Activated T-helper 2 cell treated with anti-CD3 and anti-CD28 coated beads, Interferon-gamma antibody, Interleukin-2, Interleukin-4, amounts not matched to agents 10 μg/mL and 5 μg/mL and 100 μg/mL, durations not matched to agents 14 hours and 24 hours and 36 hours (primary cell): ENCODE measurements at regions of chr10 and their contacts with region 1.

Region 1: DNA sequence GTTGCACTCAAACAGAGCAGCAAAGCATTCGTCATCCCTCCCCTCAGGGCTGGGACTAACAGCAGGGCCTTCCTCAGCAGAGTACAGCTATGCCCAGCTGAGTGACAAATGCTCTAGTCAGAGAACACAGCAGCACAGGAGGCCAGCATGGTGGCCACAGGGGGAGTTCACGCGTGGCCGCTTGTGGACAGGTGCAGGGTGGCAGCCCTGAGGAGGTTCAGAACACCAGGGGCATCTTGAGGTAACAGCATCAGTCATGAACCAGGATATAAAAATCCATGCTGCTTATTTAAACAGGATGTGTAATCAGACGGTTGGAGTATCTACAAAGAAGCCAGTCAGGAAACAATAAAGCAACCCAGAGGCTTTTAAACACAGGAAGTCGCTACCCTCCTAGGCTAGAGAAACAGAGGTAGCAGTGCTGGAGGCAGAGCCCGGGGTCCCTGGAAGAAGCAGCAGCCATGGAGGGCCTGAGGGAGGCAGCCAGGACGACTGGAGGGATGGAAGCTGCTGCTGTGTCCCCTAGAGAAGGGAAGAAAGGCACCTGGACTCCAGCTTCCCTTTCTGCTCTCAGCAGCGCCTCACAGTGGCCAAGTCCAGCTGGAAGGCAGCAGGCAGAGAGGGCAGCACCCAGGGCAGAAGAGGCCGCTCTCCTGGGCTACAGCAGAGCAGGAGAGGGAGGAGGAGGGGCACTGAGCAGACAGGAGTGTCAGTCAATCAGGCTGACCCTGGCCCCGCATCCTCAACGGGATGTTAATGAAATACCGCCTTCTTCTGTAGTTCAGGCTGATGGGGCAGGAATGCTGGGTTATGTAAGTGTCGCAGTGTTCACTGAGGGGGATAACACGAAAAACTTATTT is 70.8 kb upstream of the UCN3 start:
- DNase-seq: peak; percentile 66
- H3K4me3 Mint-ChIP-seq: peak overlapping the region; percentile 89
- H3K27ac Mint-ChIP-seq: peak overlapping the region; percentile 92
- H3K4me1 Mint-ChIP-seq: peaks cover 69% of the 10 kb centered on the region
- H3K27me3 Mint-ChIP-seq: no peaks in the 10 kb centered on the region

Region 2: GRCh38 chr10:5168897-5169296 is 125.0 kb before region 1 on chr10:
- intact Hi-C with region 1: loop called (anchors 2 kb)
- DNase-seq: no peak
- H3K4me3 Mint-ChIP-seq: no peak overlapping the region
- H3K27ac Mint-ChIP-seq: peak overlapping the region; percentile 63
- H3K4me1 Mint-ChIP-seq: peaks cover 7% of the 10 kb centered on the region
- H3K27me3 Mint-ChIP-seq: no peaks in the 10 kb centered on the region

Region 3: DNA sequence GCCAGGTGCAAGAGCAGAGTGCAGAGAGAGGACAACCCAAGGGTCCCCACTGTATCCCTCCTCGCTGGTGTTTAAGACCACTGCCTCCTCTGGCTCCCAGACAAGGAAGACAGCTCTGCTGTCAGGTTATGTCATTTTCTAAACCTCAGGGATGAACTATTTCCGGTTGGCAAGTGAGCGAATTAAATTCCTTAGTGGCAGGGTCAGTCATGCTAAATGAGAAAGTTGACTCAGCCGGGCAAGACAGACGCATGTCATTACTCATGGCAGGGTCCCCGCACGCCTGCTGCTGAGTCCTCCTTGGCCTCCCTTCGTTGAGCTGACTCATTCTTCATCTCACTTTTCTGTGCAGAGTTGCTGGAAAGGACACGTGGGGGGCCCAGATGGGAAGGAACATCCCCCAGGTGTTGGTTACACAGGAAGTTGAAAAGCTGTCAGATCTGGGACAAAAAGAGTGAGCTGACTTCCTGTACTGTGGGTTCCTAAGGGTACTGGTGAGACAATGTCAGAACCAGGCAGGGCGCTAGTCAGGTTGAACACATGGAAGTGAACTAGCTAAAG is 23.7 kb after region 1 on chr10:
- intact Hi-C with region 1: loop called (anchors 1 kb)
- DNase-seq: peak; percentile 30
- H3K4me3 Mint-ChIP-seq: peak overlapping the region; percentile 19
- H3K27ac Mint-ChIP-seq: peak overlapping the region; percentile 18
- H3K4me1 Mint-ChIP-seq: peaks cover 34% of the 10 kb centered on the region
- H3K27me3 Mint-ChIP-seq: no peaks in the 10 kb centered on the region

Region 4: GRCh38 chr10:5396556-5397300 is 102.8 kb after region 1 on chr10:
- intact Hi-C with region 1: no loop called
- DNase-seq: no peak
- H3K4me3 Mint-ChIP-seq: no peak overlapping the region
- H3K27ac Mint-ChIP-seq: no peak overlapping the region
- H3K4me1 Mint-ChIP-seq: no peaks in the 10 kb centered on the region
- H3K27me3 Mint-ChIP-seq: peaks cover 22% of the 10 kb centered on the region

Region 5: DNA sequence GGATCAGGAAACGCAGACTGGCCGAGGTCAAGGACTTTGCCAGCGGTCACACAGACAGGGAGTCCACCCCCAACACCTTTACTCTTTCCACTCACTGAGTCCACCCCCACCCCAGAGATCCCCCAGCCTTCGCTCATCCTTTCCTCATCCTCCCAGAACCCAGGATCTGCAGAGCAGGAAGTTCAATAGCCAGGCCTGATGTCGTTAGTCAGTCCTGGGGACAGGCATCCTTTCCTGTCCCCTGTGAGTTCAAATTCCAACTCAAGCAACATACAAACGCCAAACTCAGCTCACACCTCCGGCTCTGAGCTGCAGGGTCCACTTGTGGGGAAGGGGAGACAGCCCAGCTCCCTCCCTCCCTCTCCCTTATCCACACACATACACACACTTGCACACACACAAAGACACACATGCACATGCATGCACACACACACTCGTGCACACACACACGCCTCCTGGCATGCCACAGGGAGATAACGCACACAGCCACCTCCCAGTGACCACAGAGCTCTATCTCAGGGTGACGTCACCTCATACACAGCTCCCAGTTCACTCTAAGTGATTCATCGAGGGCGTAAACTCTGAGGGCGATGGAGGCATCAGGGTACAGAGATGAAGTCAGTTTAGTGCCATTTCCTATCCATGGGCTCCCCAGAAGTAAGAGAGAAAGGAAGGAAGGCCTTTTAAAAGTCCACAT is 254.8 kb after region 1 on chr10:
- intact Hi-C with region 1: loop called (anchors 10 kb)
- DNase-seq: peak; percentile 69
- H3K4me3 Mint-ChIP-seq: no peak overlapping the region
- H3K27ac Mint-ChIP-seq: no peak overlapping the region
- H3K4me1 Mint-ChIP-seq: peaks cover 30% of the 10 kb centered on the region
- H3K27me3 Mint-ChIP-seq: peaks cover 4% of the 10 kb centered on the region